ENCODE measurements at regions of chr15 and their contacts with region 1.

Region 1: DNA sequence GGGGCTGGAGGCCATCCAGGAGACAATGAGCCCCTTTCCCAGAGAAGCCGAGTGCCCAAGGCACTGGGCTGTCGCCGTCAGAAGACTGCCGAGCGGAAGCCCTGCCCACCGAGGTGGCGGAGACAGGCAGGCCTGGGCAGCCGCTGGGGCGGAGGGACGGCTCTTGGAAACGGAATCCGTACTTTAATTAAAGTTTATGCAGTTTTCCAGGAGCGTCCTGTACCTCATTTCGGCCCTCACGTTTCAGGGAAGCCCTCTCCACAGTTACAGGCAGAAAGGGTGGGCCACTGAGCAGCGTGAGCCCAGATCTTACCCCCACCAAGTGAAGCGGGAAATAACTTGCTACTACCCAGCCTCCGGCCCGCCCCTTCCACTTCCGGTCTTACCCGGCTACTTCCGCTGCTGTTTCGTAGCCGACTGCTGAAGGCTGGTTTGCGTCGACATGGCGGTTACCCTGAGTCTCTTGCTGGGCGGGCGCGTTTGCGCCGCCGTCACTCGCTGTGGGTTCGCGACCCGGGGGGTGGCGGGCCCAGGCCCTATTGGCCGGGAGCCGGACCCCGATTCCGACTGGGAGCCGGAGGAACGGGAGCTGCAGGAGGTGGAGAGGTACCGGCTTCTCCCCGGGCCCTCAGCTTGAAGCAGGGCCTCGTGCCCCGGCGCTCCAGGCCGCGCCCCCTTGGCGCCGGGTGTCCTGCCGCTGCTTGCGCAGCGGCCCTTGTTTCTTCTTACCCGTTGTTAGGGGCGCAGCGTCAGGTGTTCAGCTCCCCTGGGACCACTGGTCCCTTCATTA is at the start of gene NGRN:
- DNase-seq: peak; percentile 96
- H3K4me3 Mint-ChIP-seq: peak within 1 kb of the TSS; percentile 92
- H3K27ac Mint-ChIP-seq: peak within 1 kb of the TSS; percentile 97
- H3K4me1 Mint-ChIP-seq: peaks cover 38% of the 10 kb centered on the region
- H3K27me3 Mint-ChIP-seq: no peaks in the 10 kb centered on the region
- total RNA-seq, gene NGRN: 25.3 to 28.6 TPM

Region 2: GRCh38 chr15:89874926-89875564 is 390.4 kb before region 1 on chr15:
- CTCF ChIA-PET with region 1: no interaction called
- POLR2A ChIA-PET with region 1: no interaction called
- intact Hi-C with region 1: no loop called
- DNase-seq: peak; percentile 89
- H3K4me3 Mint-ChIP-seq: no peak overlapping the region
- H3K27ac Mint-ChIP-seq: no peak overlapping the region
- H3K4me1 Mint-ChIP-seq: peaks cover 4% of the 10 kb centered on the region
- H3K27me3 Mint-ChIP-seq: no peaks in the 10 kb centered on the region

Region 3: DNA sequence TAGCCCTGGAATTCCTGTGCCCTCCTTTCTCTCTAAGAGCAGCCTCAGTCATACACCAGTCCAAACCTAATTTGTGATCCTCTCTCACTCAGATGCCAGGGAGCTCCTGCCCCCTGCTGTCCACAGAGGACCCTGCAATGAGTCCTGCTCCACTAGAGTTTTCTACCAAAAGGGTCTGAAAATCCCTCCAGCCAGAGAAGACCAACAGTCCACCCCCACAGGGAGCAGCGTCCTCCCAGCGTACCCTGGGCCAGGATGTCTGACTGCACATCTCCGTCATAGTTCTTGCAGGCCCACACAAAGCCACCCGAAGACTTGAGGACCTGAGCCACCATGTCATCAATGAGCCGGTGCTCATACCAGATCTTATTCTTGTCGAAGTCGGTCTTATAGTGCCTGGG is 178.6 kb before region 1 on chr15:
- CTCF ChIA-PET with region 1: no interaction called
- POLR2A ChIA-PET with region 1: no interaction called
- intact Hi-C with region 1: no loop called
- DNase-seq: peak; percentile 73
- H3K4me3 Mint-ChIP-seq: no peak overlapping the region
- H3K27ac Mint-ChIP-seq: peak overlapping the region; percentile 49
- H3K4me1 Mint-ChIP-seq: peaks cover 4% of the 10 kb centered on the region
- H3K27me3 Mint-ChIP-seq: no peaks in the 10 kb centered on the region

Region 4: GRCh38 chr15:90291679-90292356 is 26.4 kb after region 1 on chr15:
- CTCF ChIA-PET with region 1: interaction called, 10 read pairs
- POLR2A ChIA-PET with region 1: no interaction called
- intact Hi-C with region 1: no loop called
- DNase-seq: peak; percentile 33
- H3K4me3 Mint-ChIP-seq: no peak overlapping the region
- H3K27ac Mint-ChIP-seq: no peak overlapping the region
- H3K4me1 Mint-ChIP-seq: peaks cover 5% of the 10 kb centered on the region
- H3K27me3 Mint-ChIP-seq: no peaks in the 10 kb centered on the region

Measured in activated CD4-positive, alpha-beta memory T cell treated with anti-CD3 and anti-CD28 coated beads for 36 hours (primary cell).